Activated CD4-positive, alpha-beta T cell treated with anti-CD3 and anti-CD28 coated beads, Interleukin-2, amount 10 ng/mL, durations not matched to agents 24 days and 14 days (primary cell): ENCODE measurements at regions of chrX and their contacts with region 1.

Region 1: DNA sequence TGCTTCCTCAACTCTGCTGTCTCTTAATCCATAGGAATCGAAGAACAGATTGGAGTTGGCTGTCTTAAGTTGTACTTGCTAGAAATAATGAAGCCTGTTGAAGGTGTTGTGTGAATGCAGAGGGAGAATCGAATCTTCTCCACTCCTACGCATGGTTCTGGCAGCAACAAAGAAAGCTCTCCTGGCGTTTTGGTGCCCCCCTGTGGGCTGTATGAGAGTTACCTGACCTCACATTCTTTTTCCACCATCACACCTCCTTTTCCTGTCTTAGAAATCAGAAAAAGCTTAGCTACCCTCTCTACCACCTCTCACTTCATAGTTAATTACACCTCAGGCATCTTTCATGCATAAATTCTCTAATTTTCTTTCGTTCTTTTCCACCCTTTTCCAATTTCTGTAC is 16.3 kb downstream of the KLF8 start:
- DNase-seq: peak; percentile 83
- H3K4me3 Mint-ChIP-seq: no peak overlapping the region
- H3K27ac Mint-ChIP-seq: no peak overlapping the region
- H3K4me1 Mint-ChIP-seq: peaks cover 9% of the 10 kb centered on the region
- H3K27me3 Mint-ChIP-seq: no peaks in the 10 kb centered on the region

Region 2: GRCh38 chrX:55135171-55135570 is 1113.3 kb before region 1 on chrX:
- intact Hi-C with region 1: loop called (anchors 10 kb)
- DNase-seq: peak; percentile 70
- H3K4me3 Mint-ChIP-seq: no peak overlapping the region
- H3K27ac Mint-ChIP-seq: no peak overlapping the region
- H3K4me1 Mint-ChIP-seq: no peaks in the 10 kb centered on the region
- H3K27me3 Mint-ChIP-seq: no peaks in the 10 kb centered on the region

Region 3: GRCh38 chrX:55695227-55696018 is 553.1 kb before region 1 on chrX:
- intact Hi-C with region 1: no loop called
- DNase-seq: peak; percentile 59
- H3K4me3 Mint-ChIP-seq: peak overlapping the region; percentile 8
- H3K27ac Mint-ChIP-seq: peak overlapping the region; percentile 19
- H3K4me1 Mint-ChIP-seq: peaks cover 13% of the 10 kb centered on the region
- H3K27me3 Mint-ChIP-seq: no peaks in the 10 kb centered on the region

Region 4: GRCh38 chrX:56219700-56220099 is 28.8 kb before region 1 on chrX:
- intact Hi-C with region 1: loop called (anchors 1 kb)
- DNase-seq: no peak
- H3K4me3 Mint-ChIP-seq: no peak overlapping the region
- H3K27ac Mint-ChIP-seq: no peak overlapping the region
- H3K4me1 Mint-ChIP-seq: no peaks in the 10 kb centered on the region
- H3K27me3 Mint-ChIP-seq: no peaks in the 10 kb centered on the region

Region 5: GRCh38 chrX:56268888-56269287 is 20.4 kb after region 1 on chrX:
- intact Hi-C with region 1: no loop called
- DNase-seq: no peak
- H3K4me3 Mint-ChIP-seq: no peak overlapping the region
- H3K27ac Mint-ChIP-seq: no peak overlapping the region
- H3K4me1 Mint-ChIP-seq: peaks cover 11% of the 10 kb centered on the region
- H3K27me3 Mint-ChIP-seq: no peaks in the 10 kb centered on the region

Region 6: DNA sequence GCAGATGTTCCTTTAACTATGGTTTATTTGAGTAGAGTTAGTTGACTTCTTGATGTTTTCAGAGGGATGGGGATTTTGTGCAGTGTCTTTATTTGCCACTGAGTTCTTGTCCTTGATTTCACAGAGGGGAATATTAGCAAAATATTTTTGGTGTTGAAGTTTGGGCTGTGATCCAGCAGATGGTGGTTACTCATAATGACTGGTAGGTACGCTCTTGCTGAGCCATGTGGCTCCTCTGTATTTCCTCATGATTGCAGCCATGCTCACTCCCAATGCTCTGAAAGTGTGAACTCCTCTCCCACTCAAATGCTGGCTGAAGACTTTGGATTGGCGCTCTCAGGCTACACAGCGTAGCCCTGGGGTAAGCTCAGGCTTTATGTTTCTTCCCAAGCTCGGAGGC is 61.4 kb after region 1 on chrX:
- intact Hi-C with region 1: no loop called
- DNase-seq: no peak
- H3K4me3 Mint-ChIP-seq: no peak overlapping the region
- H3K27ac Mint-ChIP-seq: no peak overlapping the region
- H3K4me1 Mint-ChIP-seq: peaks cover 10% of the 10 kb centered on the region
- H3K27me3 Mint-ChIP-seq: no peaks in the 10 kb centered on the region